ENCODE measurements at regions of chr2 and their contacts with region 1.

Region 1: DNA sequence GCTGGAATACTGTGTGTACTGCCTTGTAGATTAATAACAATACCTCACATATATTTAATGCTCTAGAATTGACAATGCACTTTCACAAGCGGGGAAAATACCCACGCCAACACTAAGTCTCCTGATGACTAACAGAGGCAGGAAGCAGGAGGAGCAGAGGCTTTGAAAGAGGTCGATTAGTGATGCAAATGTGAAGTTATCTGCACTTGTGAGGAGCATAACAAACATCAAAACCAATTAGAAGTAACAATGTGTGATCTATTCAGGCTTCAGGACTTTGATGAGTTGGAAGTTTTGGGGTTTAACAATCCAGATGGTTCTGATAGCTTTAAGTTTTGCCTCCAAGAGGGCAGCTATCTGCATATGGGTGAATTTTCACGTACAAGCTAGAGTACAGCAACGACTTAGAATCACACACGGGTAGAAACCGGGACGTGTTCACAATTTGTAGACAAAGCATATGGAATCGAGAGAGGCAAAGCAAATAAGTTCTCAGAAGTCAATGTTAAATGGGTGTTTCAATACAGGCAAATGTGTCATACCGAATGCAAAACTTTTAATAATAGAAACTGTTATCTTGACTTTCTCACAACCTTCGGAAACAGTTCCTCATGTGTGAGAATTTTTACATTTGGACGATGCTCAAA is 114.5 kb downstream of the METTL8 start:
- DNase-seq: peak; percentile 64
- H3K4me3 ChIP-seq: peak overlapping the region; percentile 42
- H3K27ac ChIP-seq: peak overlapping the region; percentile 100
- H3K4me1 ChIP-seq: peaks cover 100% of the 10 kb centered on the region
- CTCF ChIP-seq: no peak

Region 2: DNA sequence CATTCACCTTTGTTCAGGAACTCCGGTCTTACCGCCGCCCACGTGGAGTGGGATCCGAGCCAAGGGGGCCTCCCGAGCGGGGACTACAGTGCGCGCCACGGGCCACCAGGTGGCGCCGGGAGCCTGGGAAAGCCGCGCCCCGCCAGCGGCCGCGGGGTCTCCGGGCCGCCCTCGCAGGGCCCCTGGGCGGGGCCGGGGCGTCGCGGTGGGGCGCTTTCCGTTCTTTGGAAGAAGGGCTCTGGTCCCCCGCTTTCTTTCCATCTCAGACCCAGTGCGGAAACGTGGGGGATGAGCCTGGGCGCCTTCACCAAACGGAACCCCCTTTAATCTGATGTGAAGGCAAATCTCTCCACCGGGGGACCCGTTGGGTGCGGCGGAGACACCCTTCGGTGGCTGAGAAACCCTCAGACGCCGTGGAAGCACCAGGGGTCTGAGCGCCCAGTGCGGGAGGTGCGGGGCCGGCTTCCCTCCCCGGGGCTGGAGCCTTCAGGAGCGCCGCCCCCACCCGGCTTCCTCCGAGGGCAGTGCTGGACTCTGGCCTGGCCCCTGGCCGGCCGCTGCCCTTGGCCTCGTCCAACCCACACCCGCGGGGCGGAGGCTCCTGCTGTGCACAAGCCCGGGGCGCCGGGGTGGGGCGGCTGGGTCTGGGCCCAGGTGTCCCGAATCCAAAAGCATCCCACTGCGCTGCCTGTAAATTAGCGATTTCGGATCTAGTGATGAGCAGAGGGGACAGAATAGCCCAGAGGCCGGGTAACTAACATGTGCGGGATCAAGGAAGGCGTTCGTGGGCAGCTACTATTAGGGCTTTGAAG is 345.6 kb before region 1 on chr2:
- CTCF ChIA-PET with region 1: interaction called, 3 read pairs
- POLR2A ChIA-PET with region 1: no interaction called
- intact Hi-C with region 1: loop called (anchors 2 kb)
- DNase-seq: peak; percentile 87
- H3K4me3 ChIP-seq: peak overlapping the region; percentile 70
- H3K27ac ChIP-seq: no peak overlapping the region
- H3K4me1 ChIP-seq: peaks cover 16% of the 10 kb centered on the region
- CTCF ChIP-seq: peak; percentile 98

Region 3: GRCh38 chr2:171210864-171211431 is 108.3 kb before region 1 on chr2:
- CTCF ChIA-PET with region 1: no interaction called
- POLR2A ChIA-PET with region 1: interaction called, 7 read pairs
- intact Hi-C with region 1: loop called (anchors 2 kb)
- DNase-seq: peak; percentile 80
- H3K4me3 ChIP-seq: peak overlapping the region; percentile 59
- H3K27ac ChIP-seq: peak overlapping the region; percentile 87
- H3K4me1 ChIP-seq: peaks cover 38% of the 10 kb centered on the region
- CTCF ChIP-seq: no peak

Region 4: DNA sequence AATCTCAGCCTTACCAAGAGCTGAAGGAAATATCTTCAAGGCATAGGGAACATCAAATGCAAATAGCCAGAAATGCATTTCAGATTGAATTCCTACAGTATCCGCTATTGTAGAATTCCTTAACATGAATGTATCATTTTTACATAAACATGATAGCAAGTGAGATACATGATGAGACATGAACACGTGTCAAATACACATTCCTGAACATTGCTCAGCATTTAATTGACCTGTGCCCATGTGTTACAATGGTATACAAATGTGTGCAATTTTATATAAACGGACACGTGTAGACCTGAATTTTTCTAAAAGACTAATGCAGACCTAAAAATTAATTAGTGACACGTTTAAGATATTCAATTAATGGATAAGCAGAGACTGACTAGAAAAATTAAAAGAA is 25.6 kb before region 1 on chr2:
- CTCF ChIA-PET with region 1: no interaction called
- POLR2A ChIA-PET with region 1: interaction called, 10 read pairs
- intact Hi-C with region 1: no loop called
- DNase-seq: no peak
- H3K4me3 ChIP-seq: no peak overlapping the region
- H3K27ac ChIP-seq: no peak overlapping the region
- H3K4me1 ChIP-seq: no peaks in the 10 kb centered on the region
- CTCF ChIP-seq: no peak

Region 5: DNA sequence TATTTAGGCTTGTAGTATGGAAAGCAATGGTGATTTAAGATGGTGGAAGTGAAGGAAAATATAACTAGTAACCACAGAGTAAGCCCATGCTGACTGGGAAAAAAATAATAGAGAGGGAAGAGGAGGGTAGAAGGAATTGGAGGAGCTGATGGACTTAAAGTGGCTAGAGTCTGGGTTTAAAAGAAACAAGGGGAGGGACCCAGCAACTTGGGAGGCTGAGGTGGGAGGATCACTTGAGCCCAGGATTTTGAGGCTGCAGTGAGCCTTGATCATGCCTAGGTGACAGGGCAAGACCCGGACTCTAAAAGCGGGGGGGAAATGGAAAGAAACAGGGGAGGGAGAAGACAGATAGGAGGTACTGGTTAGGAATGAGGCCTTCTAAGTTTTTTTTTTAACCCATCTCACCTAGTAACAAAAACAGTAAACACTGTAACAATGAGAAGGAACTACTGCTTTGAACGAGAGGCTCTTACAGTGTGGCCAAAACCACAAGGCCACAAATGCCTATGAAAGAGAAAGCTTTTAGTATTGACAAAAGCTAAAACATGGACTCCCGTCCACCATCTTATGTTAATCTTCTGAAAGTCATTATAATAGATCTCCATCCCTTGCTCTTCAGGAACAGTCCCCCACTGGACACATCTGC is 87.9 kb after region 1 on chr2:
- CTCF ChIA-PET with region 1: interaction called, 4 read pairs
- POLR2A ChIA-PET with region 1: interaction called, 10 read pairs
- intact Hi-C with region 1: no loop called
- DNase-seq: no peak
- H3K4me3 ChIP-seq: no peak overlapping the region
- H3K27ac ChIP-seq: peak overlapping the region; percentile 49
- H3K4me1 ChIP-seq: peaks cover 44% of the 10 kb centered on the region
- CTCF ChIP-seq: no peak

Region 6: DNA sequence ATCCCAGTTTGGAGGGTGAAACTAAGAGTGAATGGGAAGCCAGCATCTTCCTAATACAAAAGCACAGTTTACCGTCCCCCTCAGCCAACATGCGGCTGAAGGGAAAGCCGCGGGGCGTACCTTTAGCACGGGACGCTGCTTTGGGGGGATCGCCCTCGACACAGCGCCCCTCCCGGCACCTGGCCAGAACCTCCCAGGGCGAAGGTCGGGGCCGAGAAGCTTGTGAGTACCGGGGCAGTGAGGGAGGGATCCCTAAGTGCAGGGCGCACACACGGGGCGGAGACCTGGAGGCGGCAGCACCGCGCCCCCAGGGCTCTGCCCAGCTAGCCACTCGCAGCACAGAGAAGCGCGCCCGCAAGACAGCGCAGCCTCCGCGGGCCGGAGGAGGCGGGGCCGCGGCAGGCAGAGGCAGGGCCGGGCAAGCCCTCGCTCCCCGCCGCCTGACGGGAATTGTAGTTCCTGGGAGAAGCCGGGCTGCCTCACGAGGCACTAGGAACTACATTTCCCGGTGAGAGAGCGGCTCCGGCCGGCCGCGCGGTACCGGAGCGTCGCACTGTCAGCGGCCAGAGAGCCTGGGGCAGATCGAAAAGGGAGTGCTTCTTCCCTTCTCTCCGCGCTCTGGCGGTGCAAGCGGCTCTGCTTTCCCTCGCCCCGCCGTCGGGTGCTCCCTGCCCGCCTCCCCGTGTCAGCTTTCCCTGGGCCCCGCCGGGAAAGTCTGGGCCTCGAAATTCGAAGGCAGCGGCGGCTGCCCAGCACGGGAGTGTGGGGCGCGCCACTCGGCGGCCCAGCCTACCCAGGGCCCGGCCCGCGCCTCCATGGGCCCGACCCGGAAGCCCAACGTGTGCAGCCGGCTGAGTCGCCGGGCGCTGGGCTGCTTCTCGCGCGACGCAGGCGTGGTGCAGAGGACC is 114.7 kb after region 1 on chr2 and contains the starts of genes DCAF17 and METTL8:
- CTCF ChIA-PET with region 1: interaction called, 3 read pairs
- POLR2A ChIA-PET with region 1: interaction called, 6 read pairs
- intact Hi-C with region 1: loop called (anchors 1 kb)
- DNase-seq: peak; percentile 99
- H3K4me3 ChIP-seq: peak within 1 kb of the TSS; percentile 88
- H3K27ac ChIP-seq: peak within 1 kb of the TSS; percentile 93
- H3K4me1 ChIP-seq: peaks cover 23% of the 10 kb centered on the region
- CTCF ChIP-seq: peak; percentile 91
- total RNA-seq, gene DCAF17: 24.1 and 25.9 TPM in 2 replicates
- total RNA-seq, gene METTL8: 6.9 and 11.8 TPM in 2 replicates

Measured in OCI-LY7 (cell line).